WTC11 (cell line): ENCODE measurements at regions of chr17 and their contacts with region 1.

Region 1: DNA sequence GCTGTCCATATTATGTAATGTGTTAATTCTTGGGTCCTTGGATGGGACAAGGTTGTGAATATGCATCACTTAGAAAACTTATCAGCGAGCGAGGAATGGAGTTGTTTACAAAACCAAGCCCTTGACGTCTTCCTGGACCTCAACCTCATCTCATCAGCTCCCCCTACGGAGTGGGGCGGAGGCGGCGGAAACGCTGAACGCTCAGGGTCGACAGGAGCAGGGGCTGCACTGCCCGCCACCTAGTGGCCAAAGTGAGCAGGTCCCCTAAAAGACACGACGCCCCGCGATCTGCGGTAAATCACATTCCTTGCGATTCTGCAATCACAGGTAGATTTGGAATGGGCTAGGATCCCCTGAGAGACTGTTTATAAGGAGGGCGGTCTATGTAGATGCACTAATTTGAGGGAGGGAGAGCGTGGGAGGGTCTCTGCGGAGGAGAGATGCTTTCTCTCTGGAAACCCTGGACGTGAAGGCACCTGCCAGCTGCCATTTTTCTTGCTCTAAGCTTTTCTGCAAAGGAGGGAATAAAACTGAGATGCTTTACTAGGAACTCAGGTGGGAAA is 5.4 kb upstream of the ICAM2 start:
- DNase-seq: peak; percentile 92
- ATAC-seq: peak; percentile 97
- H3K4me3 Mint-ChIP-seq: peak overlapping the region; percentile 48
- H3K27ac Mint-ChIP-seq: no peak overlapping the region
- H3K4me1 Mint-ChIP-seq: peaks cover 3% of the 10 kb centered on the region; the same call in 1 of the 2 replicates
- H3K27me3 Mint-ChIP-seq: peaks cover 13% of the 10 kb centered on the region
- CTCF ChIP-seq: peak; percentile 96

Region 2: GRCh38 chr17:63904316-63904715 is 121.5 kb before region 1 on chr17:
- CTCF ChIA-PET with region 1: interaction called, 11 read pairs
- POLR2A ChIA-PET with region 1: no interaction called
- DNase-seq: no peak
- ATAC-seq: no peak
- H3K4me3 Mint-ChIP-seq: no peak overlapping the region
- H3K27ac Mint-ChIP-seq: no peak overlapping the region
- H3K4me1 Mint-ChIP-seq: peaks cover 18% of the 10 kb centered on the region
- H3K27me3 Mint-ChIP-seq: peaks cover 6% of the 10 kb centered on the region; the same call in 1 of the 2 replicates
- CTCF ChIP-seq: no peak

Region 3: DNA sequence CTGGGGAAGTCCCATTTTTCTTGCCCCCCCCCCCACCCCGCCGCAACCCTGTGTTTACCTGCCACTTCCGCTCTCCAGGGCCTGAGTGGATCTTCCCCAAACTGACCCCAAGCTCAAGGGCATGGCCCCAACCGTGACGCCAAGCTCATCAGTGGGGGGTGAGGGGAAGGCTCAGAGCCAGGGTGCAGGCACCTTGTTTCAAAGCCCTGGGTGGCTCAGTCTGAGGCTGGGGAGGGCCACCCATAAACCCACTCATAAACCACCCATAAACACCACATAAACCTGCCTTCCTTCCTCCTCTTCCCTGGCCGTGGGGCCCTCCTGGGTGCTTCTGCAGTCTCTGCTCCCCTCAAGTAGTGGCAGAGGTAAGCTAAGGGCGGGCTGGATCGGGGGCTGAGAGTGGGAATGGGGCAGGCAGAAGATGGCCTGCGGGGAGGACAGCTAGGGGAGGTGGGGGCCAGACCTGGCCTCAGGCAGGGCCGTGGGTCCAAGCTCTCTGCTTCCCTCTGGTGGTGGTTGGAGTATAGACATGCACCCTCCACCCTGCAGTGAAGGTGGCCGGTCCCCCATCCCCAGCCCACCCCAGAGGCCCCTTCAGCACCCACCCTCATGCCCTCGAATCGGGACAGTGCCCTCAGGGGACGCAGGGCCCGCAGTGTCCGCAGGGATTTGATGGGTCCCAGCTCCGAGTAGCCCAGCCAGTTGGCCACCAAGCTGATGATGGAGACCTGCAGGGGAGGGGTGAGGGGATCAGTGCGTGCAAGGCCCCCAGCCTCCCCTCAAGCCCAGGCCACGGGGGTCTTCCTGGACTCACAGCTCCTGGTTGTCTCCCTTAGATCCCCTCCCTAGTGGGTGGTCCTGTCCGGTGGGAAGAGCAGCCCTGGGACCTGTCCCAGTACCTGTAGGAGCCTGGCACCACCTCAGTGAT is 79.1 kb before region 1 on chr17:
- CTCF ChIA-PET with region 1: interaction called, 18 read pairs
- POLR2A ChIA-PET with region 1: no interaction called
- DNase-seq: peak; percentile 73
- ATAC-seq: peak; percentile 80
- H3K4me3 Mint-ChIP-seq: no peak overlapping the region
- H3K27ac Mint-ChIP-seq: no peak overlapping the region
- H3K4me1 Mint-ChIP-seq: peaks cover 6% of the 10 kb centered on the region; the same call in 1 of the 2 replicates
- H3K27me3 Mint-ChIP-seq: no peaks in the 10 kb centered on the region
- CTCF ChIP-seq: peak; percentile 82

Region 4: DNA sequence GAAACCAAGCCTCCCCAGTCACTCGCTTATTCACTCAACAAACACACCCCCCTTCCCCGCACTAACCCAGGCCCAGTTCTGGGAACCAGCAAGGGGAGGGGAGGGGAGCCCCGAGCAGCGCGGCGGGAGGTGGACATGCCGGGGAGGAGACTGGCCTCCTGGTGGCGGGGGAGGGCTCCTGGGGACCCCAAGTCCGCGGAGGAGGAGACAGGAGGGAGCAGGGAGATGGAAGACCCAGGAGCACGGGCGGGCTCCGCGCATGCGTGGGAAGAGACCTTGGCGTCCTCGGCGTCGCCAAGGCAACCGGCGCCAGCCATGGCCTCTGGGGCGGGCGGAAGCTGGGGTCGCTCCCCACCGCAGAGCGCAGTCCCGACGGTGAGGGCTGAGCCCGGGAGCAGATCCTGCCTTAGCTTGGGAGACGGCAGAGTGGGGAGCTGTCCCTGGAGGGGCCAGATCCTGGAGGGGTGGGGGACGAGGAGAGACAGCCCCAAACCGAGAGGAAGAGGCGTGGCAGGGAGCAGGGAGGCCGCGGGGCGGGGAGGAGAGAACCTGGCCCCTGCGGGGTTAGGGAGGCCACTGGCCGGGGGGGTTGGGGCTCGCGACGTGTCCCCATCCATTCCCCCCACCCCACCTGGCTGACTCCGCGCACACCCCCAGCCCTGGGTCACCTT is 27.6 kb before region 1 on chr17 and contains the start of gene PRR29:
- CTCF ChIA-PET with region 1: interaction called, 13 read pairs
- POLR2A ChIA-PET with region 1: no interaction called
- DNase-seq: peak; percentile 82
- ATAC-seq: peak; percentile 78
- H3K4me3 Mint-ChIP-seq: peak within 1 kb of the TSS; percentile 86
- H3K27ac Mint-ChIP-seq: no peak within 1 kb of the TSS
- H3K4me1 Mint-ChIP-seq: peaks cover 16% of the 10 kb centered on the region
- H3K27me3 Mint-ChIP-seq: peaks cover 40% of the 10 kb centered on the region
- CTCF ChIP-seq: no peak
- total RNA-seq, gene PRR29: 0.64 to 1.1 TPM (median 0.85 TPM) in 3 replicates

Region 5: DNA sequence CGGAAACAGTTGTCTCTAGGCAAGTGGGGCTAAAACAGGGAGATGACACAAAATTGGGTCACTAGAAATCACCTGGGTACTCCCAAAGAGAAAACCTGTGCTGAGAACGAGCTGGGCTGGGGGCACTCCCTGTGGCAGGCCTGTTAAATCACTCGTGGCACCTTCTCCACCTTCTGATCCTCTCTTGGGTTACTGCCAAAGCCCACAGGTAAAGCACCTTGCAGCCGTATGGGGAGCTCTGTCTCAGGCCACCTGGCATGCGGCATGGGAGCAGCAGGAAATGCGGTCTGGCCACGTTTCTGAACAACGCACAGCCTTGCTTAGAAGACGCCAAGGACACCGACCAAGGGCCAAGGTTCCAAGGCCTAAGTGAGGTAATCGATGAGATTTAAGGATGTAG is 16.1 kb after region 1 on chr17:
- CTCF ChIA-PET with region 1: interaction called, 30 read pairs
- POLR2A ChIA-PET with region 1: no interaction called
- DNase-seq: no peak
- ATAC-seq: no peak
- H3K4me3 Mint-ChIP-seq: no peak overlapping the region
- H3K27ac Mint-ChIP-seq: peak overlapping the region; percentile 4; the same call in 1 of the 2 replicates
- H3K4me1 Mint-ChIP-seq: no peaks in the 10 kb centered on the region
- H3K27me3 Mint-ChIP-seq: no peaks in the 10 kb centered on the region
- CTCF ChIP-seq: no peak

Region 6: GRCh38 chr17:64103391-64104364 is 77.9 kb after region 1 on chr17:
- CTCF ChIA-PET with region 1: no interaction called
- POLR2A ChIA-PET with region 1: no interaction called
- DNase-seq: no peak
- ATAC-seq: no peak
- H3K4me3 Mint-ChIP-seq: no peak overlapping the region
- H3K27ac Mint-ChIP-seq: no peak overlapping the region
- H3K4me1 Mint-ChIP-seq: peaks cover 3% of the 10 kb centered on the region; the same call in 1 of the 2 replicates
- H3K27me3 Mint-ChIP-seq: no peaks in the 10 kb centered on the region
- CTCF ChIP-seq: no peak

Region 7: DNA sequence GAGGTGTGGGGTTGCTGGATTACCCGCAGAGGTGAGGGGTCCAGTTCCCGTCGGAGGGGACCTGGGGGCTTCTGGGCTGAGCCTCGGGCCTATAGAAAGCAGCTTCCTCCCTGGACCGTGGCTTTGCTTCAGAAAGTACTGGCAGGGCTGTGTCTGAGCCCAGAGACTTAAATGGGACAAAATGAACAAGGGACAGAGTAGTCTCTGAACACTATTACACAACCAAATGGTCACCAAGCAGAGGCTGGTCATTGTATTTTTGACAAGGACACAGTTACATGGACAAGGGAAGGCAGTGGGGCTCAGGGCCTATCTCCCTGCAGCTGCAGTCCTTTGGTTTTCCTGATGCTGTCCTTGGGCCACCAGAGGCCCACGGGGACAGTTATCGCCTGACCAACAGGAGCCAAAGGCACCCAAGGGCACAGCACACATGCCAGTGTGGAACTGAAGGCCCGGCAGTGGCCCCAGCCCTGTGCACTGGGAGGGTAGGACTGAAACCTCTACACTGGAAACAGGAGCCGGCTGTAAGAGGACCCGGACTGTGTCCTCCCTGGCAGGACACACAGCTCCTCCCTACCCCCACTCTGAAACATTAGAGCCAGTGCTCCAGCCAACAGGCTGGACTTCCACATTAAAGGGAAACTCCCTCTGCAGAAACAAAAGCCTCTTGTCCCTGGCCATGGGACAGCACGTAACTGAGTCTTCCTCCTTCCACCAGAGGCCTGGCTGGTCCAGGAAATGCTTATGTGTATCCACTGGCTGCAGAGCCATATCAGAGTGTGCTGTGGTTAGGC is 130.1 kb after region 1 on chr17:
- CTCF ChIA-PET with region 1: no interaction called
- POLR2A ChIA-PET with region 1: no interaction called
- DNase-seq: no peak
- ATAC-seq: no peak
- H3K4me3 Mint-ChIP-seq: no peak overlapping the region
- H3K27ac Mint-ChIP-seq: no peak overlapping the region
- H3K4me1 Mint-ChIP-seq: peaks cover 25% of the 10 kb centered on the region
- H3K27me3 Mint-ChIP-seq: no peaks in the 10 kb centered on the region
- CTCF ChIP-seq: no peak

Region 8: DNA sequence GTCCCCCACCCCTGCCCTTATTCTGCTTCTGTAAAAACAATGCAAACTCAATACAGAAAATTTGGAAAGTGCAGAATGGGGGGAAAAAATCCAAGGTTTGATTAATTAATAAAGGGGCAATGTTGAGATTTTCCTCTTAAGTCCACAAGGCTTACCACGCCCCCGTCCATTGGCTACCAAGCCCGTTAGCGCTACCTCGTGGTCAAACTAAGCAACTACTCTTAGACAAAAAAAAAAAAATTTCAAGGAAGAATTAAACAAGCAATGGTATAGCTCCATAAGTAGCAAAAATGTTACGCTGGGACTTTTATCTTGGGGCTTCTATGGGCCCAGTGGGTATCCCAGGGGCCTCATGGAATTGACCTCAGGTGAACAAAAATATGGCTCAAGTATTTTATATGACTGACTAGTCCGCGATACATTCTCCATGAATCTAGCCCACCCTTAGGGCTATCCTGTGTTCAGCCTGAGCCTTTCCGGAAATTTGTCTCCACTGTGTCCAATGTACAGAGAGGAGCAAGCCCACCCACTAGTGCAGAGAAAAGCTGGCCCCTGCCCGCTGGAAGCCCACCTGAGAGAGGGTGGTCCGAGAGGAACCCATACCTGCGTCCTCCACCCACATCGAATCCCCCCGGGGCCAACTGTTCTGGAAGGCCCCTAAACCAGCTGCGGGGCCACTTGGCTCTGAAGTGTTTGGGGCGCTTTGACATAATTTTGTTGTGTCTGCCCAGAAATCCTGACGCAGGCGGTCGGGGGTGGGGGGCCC is 256.3 kb after region 1 on chr17:
- CTCF ChIA-PET with region 1: interaction called, 13 read pairs
- POLR2A ChIA-PET with region 1: no interaction called
- DNase-seq: peak; percentile 49
- ATAC-seq: peak; percentile 71
- H3K4me3 Mint-ChIP-seq: no peak overlapping the region
- H3K27ac Mint-ChIP-seq: no peak overlapping the region
- H3K4me1 Mint-ChIP-seq: no peaks in the 10 kb centered on the region; the same call in 1 of the 2 replicates
- H3K27me3 Mint-ChIP-seq: no peaks in the 10 kb centered on the region
- CTCF ChIP-seq: peak; percentile 55